ENCODE measurements at regions of chrX and their contacts with region 1.

Region 1: GRCh38 chrX:72297953-72298730 is 7.6 kb downstream of the CITED1 start:
- DNase-seq: peak; percentile 33
- ATAC-seq: peak; percentile 96
- H3K4me3 Mint-ChIP-seq: no peak overlapping the region
- H3K27ac Mint-ChIP-seq: no peak overlapping the region
- H3K4me1 Mint-ChIP-seq: peaks cover 4% of the 10 kb centered on the region
- H3K27me3 Mint-ChIP-seq: peaks cover 32% of the 10 kb centered on the region
- CTCF ChIP-seq: peak; percentile 28

Region 2: DNA sequence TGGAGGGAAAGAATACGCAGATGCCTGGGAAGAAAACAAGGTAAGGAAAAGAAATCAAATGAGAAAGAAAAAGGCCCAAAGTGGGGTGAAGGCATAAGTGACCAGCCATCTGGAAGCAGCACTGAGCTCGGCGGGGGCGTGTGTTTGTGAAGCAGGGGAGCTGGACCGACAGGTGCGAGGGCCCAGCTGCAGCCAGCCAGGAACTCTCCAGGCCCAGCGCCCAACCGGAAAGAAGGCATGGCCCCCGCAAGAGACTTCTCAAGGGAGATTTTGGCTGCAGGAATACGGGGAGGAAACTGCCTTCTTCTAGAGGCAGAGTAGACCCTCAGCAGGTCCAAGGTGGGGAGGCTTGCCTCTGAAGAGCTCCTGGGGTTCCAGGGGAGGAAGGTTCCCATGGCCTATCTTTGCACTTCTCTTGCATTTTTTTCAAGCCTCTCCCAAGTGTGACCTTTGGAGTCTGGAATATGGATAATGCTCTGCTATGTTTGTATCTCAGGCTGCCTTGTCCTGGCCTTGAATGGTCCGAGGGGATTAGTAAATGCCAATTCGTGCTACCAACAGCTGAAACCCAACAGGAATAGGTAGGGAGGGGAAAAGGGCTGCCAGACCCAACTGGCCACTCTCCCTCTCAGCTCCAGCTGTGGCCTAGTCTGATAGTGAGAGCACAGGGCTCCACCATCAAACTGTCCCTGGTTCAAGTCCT is 18.4 kb after region 1 on chrX:
- CTCF ChIA-PET with region 1: interaction called, 12 read pairs
- POLR2A ChIA-PET with region 1: no interaction called
- DNase-seq: peak; percentile 32
- ATAC-seq: peak; percentile 65
- H3K4me3 Mint-ChIP-seq: peak overlapping the region; percentile 12; the same call in 1 of the 2 replicates
- H3K27ac Mint-ChIP-seq: no peak overlapping the region
- H3K4me1 Mint-ChIP-seq: peaks cover 21% of the 10 kb centered on the region
- H3K27me3 Mint-ChIP-seq: peaks cover 11% of the 10 kb centered on the region
- CTCF ChIP-seq: no peak

Region 3: DNA sequence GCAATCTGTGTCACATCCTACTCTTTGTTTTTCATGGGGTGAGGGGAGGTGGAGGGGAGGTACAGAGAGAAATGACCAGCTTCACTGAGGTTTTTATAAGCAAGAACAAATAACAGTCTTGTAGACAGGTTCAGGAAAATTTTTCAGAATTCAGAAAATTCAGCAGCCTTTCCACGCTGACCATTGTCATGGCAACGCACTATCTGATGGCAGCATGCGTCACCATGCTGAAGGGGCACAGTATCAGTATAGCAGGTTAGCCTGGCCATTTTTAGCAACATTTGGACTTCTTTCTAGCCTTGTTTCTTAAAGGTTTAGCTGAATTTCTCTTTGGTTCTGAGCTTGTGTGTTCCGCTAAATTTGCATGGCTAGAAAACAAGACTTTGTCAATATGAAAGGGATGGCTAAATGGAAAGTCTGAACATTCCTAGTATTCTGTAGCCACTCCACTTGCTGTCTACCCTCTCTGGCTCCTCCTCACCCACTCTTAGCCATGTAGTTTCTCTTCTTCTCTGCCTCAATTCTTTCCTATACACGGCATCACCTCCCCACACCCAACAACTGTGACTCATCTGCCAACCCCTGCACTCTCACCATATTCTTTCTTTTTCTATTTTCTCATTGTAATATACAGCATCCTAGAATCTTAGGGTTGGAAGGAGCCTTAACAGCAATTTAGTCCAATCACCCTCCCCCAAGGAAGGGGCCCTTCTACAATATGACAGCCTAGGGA is 50.3 kb after region 1 on chrX:
- CTCF ChIA-PET with region 1: interaction called, 20 read pairs
- POLR2A ChIA-PET with region 1: no interaction called
- DNase-seq: no peak
- ATAC-seq: no peak
- H3K4me3 Mint-ChIP-seq: no peak overlapping the region
- H3K27ac Mint-ChIP-seq: no peak overlapping the region
- H3K4me1 Mint-ChIP-seq: peaks cover 47% of the 10 kb centered on the region
- H3K27me3 Mint-ChIP-seq: no peaks in the 10 kb centered on the region
- CTCF ChIP-seq: no peak

Region 4: DNA sequence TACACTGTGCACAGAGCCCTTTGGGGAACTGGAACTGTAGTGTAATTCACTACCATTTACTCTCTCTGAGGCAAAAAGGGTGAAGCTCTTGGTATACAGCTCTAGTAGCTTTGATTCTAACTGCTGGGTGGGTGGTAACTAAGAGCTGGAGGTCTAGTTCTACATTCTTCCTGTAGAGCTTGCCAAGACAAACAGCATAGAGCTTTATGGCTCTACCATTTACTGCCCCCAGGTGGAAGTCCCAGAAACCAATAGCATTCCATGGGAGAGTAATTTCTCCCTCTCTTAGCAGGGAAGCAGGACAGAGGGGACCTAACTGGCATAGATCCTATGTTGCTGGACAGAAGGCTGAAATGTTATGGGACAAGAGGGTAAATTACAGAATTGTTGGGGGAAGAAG is 247.8 kb after region 1 on chrX:
- CTCF ChIA-PET with region 1: interaction called, 28 read pairs
- POLR2A ChIA-PET with region 1: no interaction called
- DNase-seq: no peak
- ATAC-seq: peak; percentile 69
- H3K4me3 Mint-ChIP-seq: no peak overlapping the region
- H3K27ac Mint-ChIP-seq: no peak overlapping the region
- H3K4me1 Mint-ChIP-seq: no peaks in the 10 kb centered on the region
- H3K27me3 Mint-ChIP-seq: no peaks in the 10 kb centered on the region
- CTCF ChIP-seq: no peak

Measured in WTC11 (cell line).